Left cardiac atrium (tissue), 4 donors: ENCODE measurements at regions of chr17 and their contacts with region 1.

Region 1: DNA sequence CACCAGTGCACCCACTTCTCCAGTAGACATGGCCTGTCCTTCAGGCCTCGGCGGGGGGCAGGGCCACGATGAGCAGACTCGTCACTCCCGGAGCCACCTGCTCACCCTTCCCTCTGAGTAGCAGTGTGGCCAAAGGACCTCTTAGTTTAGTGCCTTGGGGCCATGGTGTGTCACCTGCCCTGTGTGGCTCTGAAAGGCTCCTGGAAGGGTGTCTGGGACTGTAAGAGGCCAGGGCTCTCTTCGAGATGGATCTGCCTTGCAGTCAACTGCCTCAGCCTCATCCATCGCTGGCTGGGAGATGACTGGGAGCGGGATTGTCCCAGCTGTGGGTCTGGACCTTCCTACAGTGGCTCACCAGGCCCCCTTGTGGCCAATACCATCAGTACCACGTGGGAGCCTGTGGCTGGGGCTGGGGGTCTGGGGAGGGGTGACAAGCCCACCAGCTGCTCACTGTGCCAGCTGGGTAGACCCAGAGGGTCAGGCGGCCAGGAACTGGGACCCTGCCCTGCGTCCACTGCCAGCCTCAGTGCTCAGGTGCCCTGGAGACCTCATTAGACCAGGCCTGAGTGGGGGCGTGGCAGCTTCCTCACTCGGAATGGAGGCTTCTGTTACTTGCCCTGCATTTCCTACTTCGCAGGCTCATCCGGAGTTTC is 133.4 kb downstream of the OR1D5 start:
- DNase-seq: peak; percentile 51
- ATAC-seq: peak; percentile 67 to 68

Region 2: DNA sequence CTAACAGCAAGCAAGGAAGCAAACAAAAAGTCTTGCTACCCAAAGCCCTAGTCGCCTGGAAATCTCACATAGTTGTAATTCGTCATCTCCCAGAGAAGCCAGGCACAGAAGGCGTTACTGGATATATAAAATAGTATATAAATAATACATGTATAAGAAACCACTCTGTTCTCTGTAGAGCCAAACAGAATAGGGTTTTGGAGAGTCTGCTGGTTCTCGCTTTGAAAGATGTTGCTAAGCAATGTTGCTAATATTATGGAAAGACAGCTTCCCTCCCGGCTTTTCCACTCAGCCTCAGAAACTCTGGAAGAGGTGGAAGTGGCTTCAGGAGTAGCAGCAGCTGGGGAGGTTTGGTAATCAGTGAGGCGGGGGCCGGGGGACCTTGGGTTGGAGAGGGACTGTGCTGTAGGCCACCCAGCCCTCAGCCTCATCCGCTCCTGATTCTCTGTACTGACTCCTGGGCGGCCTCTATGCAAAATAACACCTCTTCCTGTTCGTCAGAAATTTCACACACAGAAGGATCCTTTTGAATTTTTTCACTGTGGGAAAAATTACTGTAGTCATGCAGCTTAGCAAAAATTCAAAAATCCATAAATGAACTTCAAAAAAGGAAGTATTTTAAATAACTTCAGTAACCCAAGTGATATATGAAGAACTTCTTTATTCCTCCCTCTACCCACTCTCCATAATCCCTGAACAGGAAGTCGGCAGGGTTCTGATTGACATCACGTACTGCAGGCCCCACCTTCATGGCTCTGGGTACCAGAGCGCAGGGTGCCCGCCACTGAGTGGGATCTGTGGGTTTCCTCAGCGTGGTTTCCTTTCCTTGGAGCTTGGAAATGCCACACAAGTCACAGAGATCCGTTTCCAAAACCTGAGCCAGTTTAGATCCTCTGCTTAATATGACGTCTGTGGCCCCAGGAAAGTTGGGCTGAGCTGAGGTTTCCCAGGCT is 82.3 kb before region 1 on chr17:
- intact Hi-C with region 1: loop called (anchors 2 to 5 kb)
- DNase-seq: no peak
- ATAC-seq: peak in 1 of 2 donors; percentile 18

Region 3: GRCh38 chr17:3043737-3044365 is 113.8 kb after region 1 on chr17:
- intact Hi-C with region 1: no loop called
- DNase-seq: no peak
- ATAC-seq: no peak

Region 4: DNA sequence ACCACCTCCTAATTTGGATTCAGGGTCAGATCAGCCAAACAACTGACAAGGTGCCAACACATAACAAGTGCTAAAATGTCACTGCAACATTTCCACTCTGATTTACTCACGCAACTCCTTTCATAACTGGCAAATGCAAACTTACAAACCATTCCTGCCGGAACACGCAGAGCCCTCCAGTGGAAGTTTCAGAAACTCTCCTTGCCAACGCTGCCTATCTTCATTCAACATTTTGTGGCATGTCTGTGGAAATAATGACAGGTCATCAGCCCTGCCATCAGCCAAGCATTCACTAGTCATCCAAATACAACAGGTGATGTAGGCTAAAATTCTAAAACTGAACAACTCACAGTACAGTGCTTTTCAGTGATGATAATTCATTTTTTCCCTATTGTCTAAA is 405.9 kb after region 1 on chr17:
- intact Hi-C with region 1: no loop called
- DNase-seq: no peak
- ATAC-seq: peak in 1 of 2 donors; percentile 34